ENCODE measurements at regions of chr9 and their contacts with region 1.

Region 1: GRCh38 chr9:71741711-71742648 is 26.3 kb downstream of the CEMIP2 start:
- DNase-seq: peak; percentile 94
- ATAC-seq: peak; percentile 93
- H3K4me3 ChIP-seq: peak overlapping the region in 2 of 3 experiments; percentile 9 to 18; a peak in 2 of 6 replicates
- H3K27ac ChIP-seq: peak overlapping the region; percentile 82
- H3K4me1 ChIP-seq: peaks cover 56% of the 10 kb centered on the region
- H3K27me3 ChIP-seq: no peaks in the 10 kb centered on the region
- CTCF ChIP-seq: no peak
- EP300 ChIP-seq: peak in 1 of 2 experiments; percentile 95; a peak in 2 of 4 replicates
- POLR2A ChIP-seq: no peak
- RAD21 ChIP-seq: no peak

Region 2: GRCh38 chr9:71725590-71726338 is 16.2 kb before region 1 on chr9:
- CTCF ChIA-PET with region 1: no interaction called
- POLR2A ChIA-PET with region 1: no interaction called
- in situ Hi-C with region 1: no loop called
- intact Hi-C with region 1: loop called (anchors 2 kb)
- DNase-seq: peak; percentile 95
- ATAC-seq: peak; percentile 98
- H3K4me3 ChIP-seq: no peak overlapping the region
- H3K27ac ChIP-seq: peak overlapping the region; percentile 62
- H3K4me1 ChIP-seq: peaks cover 48% of the 10 kb centered on the region
- H3K27me3 ChIP-seq: no peaks in the 10 kb centered on the region
- CTCF ChIP-seq: no peak
- EP300 ChIP-seq: peak; percentile 69 to 95; a peak in 3 of 4 replicates
- POLR2A ChIP-seq: no peak
- RAD21 ChIP-seq: no peak

Region 3: DNA sequence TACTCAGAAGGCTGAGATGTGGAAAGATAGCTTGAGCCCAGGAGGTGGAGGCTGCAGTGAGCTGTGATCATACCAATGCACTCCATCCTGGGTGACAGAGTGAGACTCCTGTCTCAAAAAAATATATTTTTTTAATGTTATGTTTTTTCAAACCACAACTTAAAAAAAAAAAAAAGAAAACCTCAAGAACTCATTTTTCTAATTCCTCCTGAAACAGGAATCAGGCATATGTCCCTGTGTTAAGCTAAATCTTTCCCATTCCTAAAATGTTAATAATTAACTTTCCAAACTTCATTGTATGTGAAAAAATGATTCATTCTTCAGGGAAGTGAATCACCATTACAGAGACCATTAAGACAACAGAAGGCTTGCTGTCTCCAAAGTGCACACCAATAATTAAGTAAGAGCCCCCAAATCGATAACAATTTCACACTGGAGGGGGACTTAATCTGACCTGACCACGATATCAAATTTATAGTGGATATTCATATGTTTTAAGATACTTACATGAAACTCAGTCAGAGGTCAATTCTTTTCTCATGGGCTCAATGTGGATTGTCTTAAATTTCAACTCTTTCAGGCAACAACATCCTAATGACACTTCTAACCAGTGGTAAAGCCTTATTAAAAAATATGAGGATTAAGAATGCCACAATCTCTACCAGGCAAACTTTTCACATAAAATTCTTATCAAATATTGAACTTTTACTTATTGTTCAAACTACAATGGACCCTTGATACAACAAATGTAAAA is 21.1 kb after region 1 on chr9:
- CTCF ChIA-PET with region 1: no interaction called
- POLR2A ChIA-PET with region 1: interaction called, 29 read pairs
- in situ Hi-C with region 1: no loop called
- intact Hi-C with region 1: loop called (anchors 2 kb)
- DNase-seq: peak; percentile 82
- ATAC-seq: peak; percentile 37
- H3K4me3 ChIP-seq: peak overlapping the region; percentile 31 to 99 (median 98); a peak in 5 of 6 replicates
- H3K27ac ChIP-seq: peak overlapping the region; percentile 92
- H3K4me1 ChIP-seq: peaks cover 78% of the 10 kb centered on the region
- H3K27me3 ChIP-seq: peaks cover 0 to 6% of the 10 kb centered on the region in 2 experiments; a peak in 1 of 5 replicates
- CTCF ChIP-seq: no peak
- EP300 ChIP-seq: peak in 1 of 2 experiments; percentile 52; a peak in 1 of 4 replicates
- POLR2A ChIP-seq: no peak
- RAD21 ChIP-seq: no peak

Region 4: GRCh38 chr9:72185561-72185960 is 443.6 kb after region 1 on chr9:
- CTCF ChIA-PET with region 1: no interaction called
- POLR2A ChIA-PET with region 1: no interaction called
- in situ Hi-C with region 1: no loop called
- intact Hi-C with region 1: no loop called
- DNase-seq: no peak
- ATAC-seq: peak; percentile 47; the same call in 2 of the 3 replicates
- H3K4me3 ChIP-seq: no peak overlapping the region
- H3K27ac ChIP-seq: no peak overlapping the region
- H3K4me1 ChIP-seq: no peaks in the 10 kb centered on the region
- H3K27me3 ChIP-seq: no peaks in the 10 kb centered on the region
- CTCF ChIP-seq: no peak
- EP300 ChIP-seq: no peak
- POLR2A ChIP-seq: no peak
- RAD21 ChIP-seq: no peak

Measured in HepG2 (cell line).